K562 (cell line): ENCODE measurements at regions of chr19 and their contacts with region 1.

Region 1: GRCh38 chr19:39154593-39155406 is 29.2 kb downstream of the PAK4 start:
- DNase-seq: peak; percentile 73 to 81 (median 76)
- ATAC-seq: peak; percentile 92
- H3K4me3 ChIP-seq: no peak overlapping the region
- H3K27ac ChIP-seq: no peak overlapping the region
- H3K4me1 ChIP-seq: peaks cover 43 to 70% of the 10 kb centered on the region in 2 experiments
- H3K27me3 ChIP-seq: no peaks in the 10 kb centered on the region
- CTCF ChIP-seq: 0 out of 6 replicates have a peak, but pooled peaks of 2 of the 3 experiments have one; percentile 19 to 28
- EP300 ChIP-seq: no peak
- POLR2A ChIP-seq: no peak
- RAD21 ChIP-seq: no peak

Region 2: GRCh38 chr19:39144245-39145071 is 10.3 kb before region 1 on chr19:
- CTCF ChIA-PET with region 1: no interaction called
- POLR2A ChIA-PET with region 1: interaction called, 13 read pairs
- in situ Hi-C with region 1: no loop called
- intact Hi-C with region 1: no loop called
- DNase-seq: no peak
- ATAC-seq: no peak
- H3K4me3 ChIP-seq: no peak overlapping the region
- H3K27ac ChIP-seq: no peak overlapping the region
- H3K4me1 ChIP-seq: peaks cover 15 to 40% of the 10 kb centered on the region in 2 experiments
- H3K27me3 ChIP-seq: no peaks in the 10 kb centered on the region
- CTCF ChIP-seq: no peak
- EP300 ChIP-seq: no peak
- POLR2A ChIP-seq: no peak
- RAD21 ChIP-seq: no peak